Natural killer cell (primary cell): ENCODE measurements at regions of chr17 and their contacts with region 1.

Region 1: DNA sequence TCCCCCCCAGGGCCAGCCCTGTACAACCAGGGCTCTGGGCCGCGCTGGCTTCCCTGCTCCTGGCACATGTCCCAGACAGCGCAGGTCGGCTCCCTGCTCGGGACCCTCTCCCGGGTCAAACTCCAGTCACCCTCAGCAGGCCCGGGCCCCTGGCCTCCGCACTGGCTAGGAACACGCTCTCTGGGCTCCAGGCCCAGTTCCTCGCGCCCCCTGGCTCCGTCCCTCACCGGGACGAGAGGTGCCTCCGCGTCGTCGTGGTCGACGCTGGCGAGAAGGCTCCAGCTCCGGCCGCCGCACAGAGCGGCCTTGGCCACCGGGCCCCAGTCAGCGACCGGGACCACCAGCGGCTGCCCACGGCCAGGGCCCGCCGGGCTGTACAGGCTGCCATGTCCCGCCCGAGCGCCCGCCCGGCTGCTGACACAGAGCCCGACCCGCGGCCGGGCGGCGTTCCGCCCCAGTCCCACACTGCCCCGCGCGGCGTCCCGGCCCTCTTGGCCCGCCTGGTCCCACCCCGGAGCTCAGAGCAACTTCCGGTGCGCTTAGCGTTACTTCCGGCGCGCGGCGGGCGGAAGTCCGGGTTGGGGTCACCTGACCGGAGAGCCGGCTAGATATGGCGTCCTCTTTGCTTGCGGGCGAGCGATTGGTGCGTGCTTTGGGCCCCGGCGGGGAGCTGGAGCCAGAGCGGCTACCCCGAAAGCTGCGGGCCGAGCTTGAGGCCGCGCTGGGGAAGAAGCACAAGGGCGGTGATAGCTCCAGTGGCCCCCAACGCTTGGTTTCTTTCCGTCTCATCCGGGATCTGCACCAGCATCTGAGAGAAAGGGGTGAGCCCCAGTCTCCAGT is at the start of gene POLDIP2:
- DNase-seq: peak; percentile 95 to 97
- ATAC-seq: peak; percentile 98 to 100 (median 98)
- H3K4me3 ChIP-seq: peak within 1 kb of the TSS; percentile 76
- H3K4me3 Mint-ChIP-seq: peak within 1 kb of the TSS; percentile 97
- H3K27ac ChIP-seq: peak within 1 kb of the TSS; percentile 78
- H3K27ac Mint-ChIP-seq: peak within 1 kb of the TSS; percentile 94
- H3K4me1 ChIP-seq: peaks cover 15% of the 10 kb centered on the region
- H3K4me1 Mint-ChIP-seq: peaks cover 24 to 26% of the 10 kb centered on the region in 2 donors
- H3K27me3 ChIP-seq: no peaks in the 10 kb centered on the region
- H3K27me3 Mint-ChIP-seq: no peaks in the 10 kb centered on the region
- CTCF ChIP-seq: no peak
- total RNA-seq, gene POLDIP2: 30.8 to 37.0 (median 33.7) TPM

Region 2: DNA sequence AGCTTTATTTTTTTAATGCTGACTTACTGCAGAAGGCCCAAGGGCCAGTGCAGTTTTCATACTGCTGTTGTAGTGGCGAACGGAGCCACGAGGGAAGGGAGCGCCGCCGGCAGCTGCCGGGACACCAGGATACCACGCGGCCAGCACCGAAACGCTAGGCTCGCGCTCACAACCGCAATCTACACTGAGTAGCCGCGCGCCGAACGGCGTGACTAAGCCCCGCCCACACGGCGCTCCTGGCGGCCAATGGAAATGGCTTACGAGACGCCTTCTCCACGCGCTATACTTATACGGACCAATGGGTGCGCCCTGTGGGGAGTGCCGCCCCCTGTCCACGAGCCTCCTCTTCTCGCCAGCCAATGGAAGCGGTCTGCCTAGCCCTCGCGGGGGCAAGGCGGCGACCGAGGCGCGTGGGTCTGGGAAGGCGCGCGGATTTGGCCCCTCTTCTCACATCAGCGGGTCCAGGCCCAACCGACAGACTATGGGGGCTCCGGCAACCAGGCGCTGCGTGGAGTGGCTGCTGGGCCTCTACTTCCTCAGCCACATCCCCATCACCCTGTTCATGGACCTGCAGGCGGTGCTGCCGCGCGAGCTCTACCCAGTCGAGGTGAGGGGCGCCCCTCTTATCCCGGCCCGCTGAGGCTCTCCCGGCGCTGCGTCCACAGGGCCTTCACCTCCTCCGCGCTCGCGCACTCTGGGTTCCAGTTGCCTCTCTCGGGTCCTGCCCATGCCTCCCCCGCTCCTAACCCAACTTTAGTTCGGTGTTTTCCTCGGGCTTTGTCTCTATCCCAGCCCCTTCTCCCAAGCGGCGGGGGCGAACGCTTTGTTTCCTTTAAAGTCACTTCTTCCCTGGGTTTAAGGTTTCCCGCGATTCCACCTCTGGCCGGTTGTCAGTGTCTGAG is 38.3 kb before region 1 on chr17 and contains the start of gene TMEM97:
- intact Hi-C with region 1: loop called (anchors 1 kb)
- DNase-seq: peak; percentile 94 to 97
- ATAC-seq: peak; percentile 97 to 99 (median 98)
- H3K4me3 ChIP-seq: peak within 1 kb of the TSS; percentile 77
- H3K4me3 Mint-ChIP-seq: peak within 1 kb of the TSS; percentile 89
- H3K27ac ChIP-seq: peak within 1 kb of the TSS; percentile 19
- H3K27ac Mint-ChIP-seq: peak within 1 kb of the TSS; percentile 78 to 90
- H3K4me1 ChIP-seq: peaks cover 18% of the 10 kb centered on the region
- H3K4me1 Mint-ChIP-seq: peaks cover 25 to 28% of the 10 kb centered on the region in 2 donors
- H3K27me3 ChIP-seq: no peaks in the 10 kb centered on the region
- H3K27me3 Mint-ChIP-seq: no peaks in the 10 kb centered on the region
- CTCF ChIP-seq: no peak
- total RNA-seq, gene TMEM97: 4.6 to 8.8 (median 7.5) TPM

Region 3: GRCh38 chr17:28426081-28426519 is 68.8 kb after region 1 on chr17:
- intact Hi-C with region 1: no loop called
- DNase-seq: peak in 1 of 2 donors; percentile 12
- ATAC-seq: peak in 1 of 3 donors; percentile 10
- H3K4me3 ChIP-seq: no peak overlapping the region
- H3K4me3 Mint-ChIP-seq: no peak overlapping the region
- H3K27ac ChIP-seq: no peak overlapping the region
- H3K27ac Mint-ChIP-seq: no peak overlapping the region
- H3K4me1 ChIP-seq: no peaks in the 10 kb centered on the region
- H3K4me1 Mint-ChIP-seq: no peaks in the 10 kb centered on the region
- H3K27me3 ChIP-seq: no peaks in the 10 kb centered on the region
- H3K27me3 Mint-ChIP-seq: peaks cover 5 to 9% of the 10 kb centered on the region in 2 donors
- CTCF ChIP-seq: no peak